Activated CD4-positive, alpha-beta memory T cell treated with anti-CD3 and anti-CD28 coated beads for 36 hours (primary cell): ENCODE measurements at regions of chr9 and their contacts with region 1.

Region 1: DNA sequence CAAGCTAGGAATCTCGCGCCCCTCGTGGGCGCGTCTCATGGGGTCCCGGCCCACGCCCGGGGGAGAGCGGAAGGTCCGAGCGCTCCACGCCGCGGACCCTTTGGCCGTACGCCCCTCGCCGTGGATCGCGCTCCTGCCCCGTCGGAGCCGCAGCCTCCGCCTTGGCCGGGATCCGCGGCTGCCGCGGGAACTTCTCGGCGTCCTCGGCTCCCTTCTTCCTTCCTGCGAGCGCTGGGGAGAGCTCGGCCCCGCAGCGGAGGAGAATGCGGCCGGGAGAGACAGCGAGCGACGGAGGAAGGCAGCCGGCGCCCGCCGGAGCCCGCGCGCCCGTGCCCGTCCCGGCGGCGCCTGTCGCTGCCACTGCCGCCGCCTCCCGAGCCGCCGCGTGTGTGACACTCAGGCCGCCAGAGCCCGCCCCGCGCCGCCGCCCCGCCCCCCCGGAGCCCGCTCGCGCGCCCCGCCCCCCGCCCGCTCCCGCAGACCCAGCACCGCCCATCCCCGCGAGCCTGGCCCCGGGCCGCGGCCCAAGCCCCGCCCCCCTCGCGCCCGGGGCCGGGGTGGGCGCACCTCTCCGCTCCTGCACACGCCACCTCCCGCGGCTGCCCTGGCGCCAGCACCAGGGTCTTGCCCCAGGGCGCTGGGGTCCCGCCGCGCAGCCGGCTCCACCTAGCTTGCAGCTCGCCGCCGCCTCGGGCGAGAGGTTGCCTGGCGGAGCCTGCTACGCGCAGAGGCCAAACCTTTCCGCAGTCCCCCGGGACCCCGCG is at the start of gene SHB:
- DNase-seq: peak; percentile 85
- H3K4me3 Mint-ChIP-seq: peak within 1 kb of the TSS; percentile 68
- H3K27ac Mint-ChIP-seq: no peak within 1 kb of the TSS
- H3K4me1 Mint-ChIP-seq: peaks cover 19% of the 10 kb centered on the region
- H3K27me3 Mint-ChIP-seq: peaks cover 6% of the 10 kb centered on the region
- total RNA-seq, gene SHB: 1.1 to 1.2 TPM

Region 2: GRCh38 chr9:37390759-37391158 is 678.3 kb before region 1 on chr9:
- CTCF ChIA-PET with region 1: no interaction called
- POLR2A ChIA-PET with region 1: no interaction called
- intact Hi-C with region 1: no loop called
- DNase-seq: peak; percentile 62
- H3K4me3 Mint-ChIP-seq: no peak overlapping the region
- H3K27ac Mint-ChIP-seq: no peak overlapping the region
- H3K4me1 Mint-ChIP-seq: peaks cover 2% of the 10 kb centered on the region
- H3K27me3 Mint-ChIP-seq: no peaks in the 10 kb centered on the region

Region 3: GRCh38 chr9:38008168-38009034 is 60.6 kb before region 1 on chr9:
- CTCF ChIA-PET with region 1: interaction called, 3 read pairs
- POLR2A ChIA-PET with region 1: no interaction called
- intact Hi-C with region 1: loop called (anchors 5 kb)
- DNase-seq: peak; percentile 82
- H3K4me3 Mint-ChIP-seq: no peak overlapping the region
- H3K27ac Mint-ChIP-seq: peak overlapping the region; percentile 79
- H3K4me1 Mint-ChIP-seq: peaks cover 14% of the 10 kb centered on the region
- H3K27me3 Mint-ChIP-seq: no peaks in the 10 kb centered on the region

Region 4: GRCh38 chr9:38141746-38142591 is 72.9 kb after region 1 on chr9:
- CTCF ChIA-PET with region 1: no interaction called
- POLR2A ChIA-PET with region 1: no interaction called
- intact Hi-C with region 1: no loop called
- DNase-seq: no peak
- H3K4me3 Mint-ChIP-seq: no peak overlapping the region
- H3K27ac Mint-ChIP-seq: no peak overlapping the region
- H3K4me1 Mint-ChIP-seq: no peaks in the 10 kb centered on the region
- H3K27me3 Mint-ChIP-seq: peaks cover 25% of the 10 kb centered on the region